ENCODE measurements at regions of chr10 and their contacts with region 1.

Region 1: GRCh38 chr10:69327463-69328379 is 49.4 kb downstream of the HK1 start:
- DNase-seq: peak; percentile 77
- H3K4me3 ChIP-seq: peak overlapping the region; percentile 56
- H3K27ac ChIP-seq: peak overlapping the region; percentile 93
- H3K4me1 ChIP-seq: peaks cover 100% of the 10 kb centered on the region
- H3K27me3 ChIP-seq: no peaks in the 10 kb centered on the region
- CTCF ChIP-seq: no peak

Region 2: GRCh38 chr10:68271196-68271882 is 1056.4 kb before region 1 on chr10:
- intact Hi-C with region 1: no loop called
- DNase-seq: no peak
- H3K4me3 ChIP-seq: no peak overlapping the region
- H3K27ac ChIP-seq: peak overlapping the region; percentile 33
- H3K4me1 ChIP-seq: no peaks in the 10 kb centered on the region
- H3K27me3 ChIP-seq: no peaks in the 10 kb centered on the region
- CTCF ChIP-seq: no peak

Region 3: DNA sequence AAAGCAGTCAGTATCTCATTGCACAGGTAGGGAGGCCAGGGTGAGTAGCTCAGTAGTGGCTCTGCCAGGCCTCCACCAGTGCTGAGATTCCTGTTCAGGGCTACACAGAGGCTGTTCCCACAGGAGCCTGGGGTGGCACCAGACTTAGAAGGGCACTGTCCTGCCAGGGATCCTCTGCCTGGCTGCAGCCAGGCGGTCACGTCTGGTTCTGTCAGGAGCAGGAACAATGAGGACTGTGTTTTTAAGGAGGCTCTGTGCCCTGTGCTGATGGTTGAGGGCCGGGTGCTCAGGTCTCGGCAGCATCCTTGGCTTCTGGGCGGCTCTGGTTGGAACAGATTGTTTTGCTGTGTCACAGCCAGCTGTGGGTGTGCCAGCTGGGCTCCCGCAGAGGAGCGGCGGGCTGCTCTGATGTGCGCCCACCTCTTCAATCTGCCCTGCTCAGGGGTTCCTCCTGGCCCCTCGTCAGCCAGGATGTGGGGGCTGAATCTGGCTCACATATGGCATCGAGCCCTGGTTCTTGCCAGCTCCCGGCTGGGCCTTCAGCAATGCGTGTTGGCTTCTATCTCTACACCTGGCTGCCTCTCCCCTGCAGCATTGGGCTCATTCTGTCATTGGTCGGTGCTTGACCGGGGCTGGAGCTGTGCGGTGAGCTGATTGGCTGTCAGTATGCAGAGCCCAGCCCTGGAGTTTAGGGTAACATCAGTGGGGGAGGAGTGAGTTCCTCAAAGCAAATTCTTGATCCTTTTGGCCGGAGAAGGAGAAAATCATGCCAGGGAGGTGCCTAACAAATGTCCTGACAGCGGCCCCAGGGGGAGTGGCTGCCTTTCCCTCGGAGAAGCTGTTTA is 47.8 kb after region 1 on chr10:
- intact Hi-C with region 1: loop called (anchors 10 kb)
- DNase-seq: no peak
- H3K4me3 ChIP-seq: peak overlapping the region; percentile 11
- H3K27ac ChIP-seq: peak overlapping the region; percentile 76
- H3K4me1 ChIP-seq: peaks cover 45% of the 10 kb centered on the region
- H3K27me3 ChIP-seq: no peaks in the 10 kb centered on the region
- CTCF ChIP-seq: peak; percentile 32

Measured in left ventricle myocardium inferior (tissue), 1 donor.